Esophagus squamous epithelium (tissue), 5 donors: ENCODE measurements at regions of chr17 and their contacts with region 1.

Region 1: DNA sequence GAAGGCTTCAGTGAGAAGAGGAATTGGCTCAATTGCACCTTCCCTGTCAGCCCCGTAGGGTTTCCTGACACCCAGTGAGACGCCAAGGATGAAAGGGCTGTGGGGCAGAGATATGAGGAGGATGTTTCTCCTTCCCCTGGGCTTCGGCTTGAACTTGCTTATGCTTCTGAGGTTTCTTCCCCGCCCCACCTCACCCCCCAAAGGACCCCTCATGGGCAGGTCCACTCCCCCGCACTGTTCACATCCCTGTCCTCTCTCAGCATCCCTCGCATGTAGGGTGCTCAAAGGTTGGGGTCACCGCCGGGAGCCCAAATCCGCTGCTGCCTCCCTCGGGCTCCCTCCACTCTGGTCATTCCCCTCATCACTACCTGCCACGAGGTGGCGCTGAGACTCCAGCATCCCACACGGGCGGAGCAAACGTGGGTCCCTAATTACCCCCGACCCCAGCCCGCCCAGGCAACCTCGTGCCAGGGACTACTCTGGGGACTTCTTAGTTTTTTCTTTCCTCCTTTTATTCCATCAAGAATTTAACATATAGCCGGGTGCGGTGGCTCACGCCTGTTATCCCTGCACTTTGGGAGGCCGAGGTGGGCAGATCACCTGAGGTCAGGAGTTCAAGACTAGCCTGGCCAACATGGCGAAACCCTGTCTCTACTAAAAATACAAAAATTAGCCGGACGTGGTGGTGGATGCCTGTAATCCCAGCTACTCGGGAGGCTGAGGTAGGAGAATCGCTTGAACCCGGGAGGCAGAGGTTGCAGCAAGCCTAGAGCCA is 3.3 kb upstream of the TRARG1 start:
- DNase-seq: no peak
- H3K4me3 ChIP-seq: no peak overlapping the region
- H3K27ac ChIP-seq: no peak overlapping the region
- H3K4me1 ChIP-seq: peaks cover 0 to 13% (median 4%) of the 10 kb centered on the region in 3 donors
- H3K27me3 ChIP-seq: peaks cover 0 to 89% (median 0%) of the 10 kb centered on the region in 4 donors
- CTCF ChIP-seq: peak; percentile 49 to 82 (median 70)
- POLR2A ChIP-seq: no peak

Region 2: DNA sequence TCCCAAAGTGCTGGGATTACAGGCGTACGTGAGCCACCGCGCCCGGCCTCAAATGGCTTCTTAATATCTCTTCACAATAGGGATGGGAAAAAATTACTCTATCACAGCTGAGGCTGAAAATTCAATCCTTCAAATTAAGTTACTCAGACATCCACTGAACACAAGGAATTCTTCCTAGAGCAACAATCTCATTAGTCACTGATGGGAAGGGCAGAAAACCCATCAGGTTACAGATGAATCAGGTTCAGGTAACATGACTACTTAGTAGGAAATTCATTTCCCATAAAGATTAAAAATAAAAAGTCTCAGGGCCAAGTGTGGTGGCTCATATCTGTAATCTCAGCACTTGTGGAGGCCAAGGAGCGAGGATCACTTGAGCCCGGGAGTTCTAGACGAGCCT is 53.8 kb before region 1 on chr17:
- intact Hi-C with region 1: no loop called
- DNase-seq: no peak
- H3K4me3 ChIP-seq: no peak overlapping the region
- H3K27ac ChIP-seq: no peak overlapping the region
- H3K4me1 ChIP-seq: no peaks in the 10 kb centered on the region
- H3K27me3 ChIP-seq: peaks cover 0 to 30% (median 0%) of the 10 kb centered on the region in 4 donors
- CTCF ChIP-seq: no peak
- POLR2A ChIP-seq: no peak

Region 3: DNA sequence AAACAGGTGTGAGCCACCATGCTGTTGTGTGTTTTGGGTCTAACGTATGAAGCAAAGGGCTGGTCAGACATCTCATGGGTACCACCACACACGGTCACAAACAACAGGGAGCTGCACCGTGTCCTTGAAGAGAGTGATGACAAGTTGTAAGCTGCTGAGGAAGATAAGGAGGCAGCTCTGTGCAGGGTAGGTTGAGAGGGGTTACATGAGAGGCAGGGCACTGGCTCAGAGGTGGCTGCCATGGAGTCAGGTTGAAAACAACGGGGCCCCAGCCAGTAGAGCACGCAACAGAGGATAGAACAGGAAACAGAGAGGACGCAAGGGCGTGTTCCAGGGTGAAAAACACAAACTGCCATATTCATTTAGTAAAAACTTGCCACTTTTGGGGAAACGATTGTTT is 55.6 kb after region 1 on chr17:
- intact Hi-C with region 1: loop called (anchors 5 kb)
- DNase-seq: no peak
- H3K4me3 ChIP-seq: no peak overlapping the region
- H3K27ac ChIP-seq: no peak overlapping the region
- H3K4me1 ChIP-seq: peaks cover 0 to 7% (median 3%) of the 10 kb centered on the region in 3 donors
- H3K27me3 ChIP-seq: no peaks in the 10 kb centered on the region
- CTCF ChIP-seq: no peak
- POLR2A ChIP-seq: no peak